ENCODE measurements at regions of chr17 and their contacts with region 1.

Region 1: DNA sequence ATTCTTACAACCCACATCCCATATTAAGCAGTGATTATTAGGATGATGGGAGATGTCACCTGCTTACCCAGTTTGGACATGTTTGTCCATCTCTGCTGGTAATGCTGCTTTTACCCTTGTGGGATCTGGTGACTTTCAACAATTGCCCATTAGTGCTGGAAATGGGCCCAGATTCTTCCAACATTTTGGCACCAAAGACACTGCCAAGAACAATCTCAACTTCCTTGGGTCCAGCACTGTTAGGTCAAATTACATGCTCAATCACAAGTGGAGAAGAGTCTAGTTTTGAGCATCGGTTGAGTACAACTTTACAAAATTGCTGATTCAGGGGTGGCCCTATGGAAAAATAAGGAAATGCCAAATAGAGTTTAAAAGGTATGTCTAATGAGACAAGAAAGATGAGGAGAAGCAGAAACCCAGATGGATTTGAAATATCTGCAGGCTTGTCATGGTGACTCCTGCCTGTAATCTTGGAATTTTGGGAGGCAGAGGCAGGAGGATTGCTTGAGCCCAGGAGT is 13.0 kb upstream of the ZFP3 start:
- DNase-seq: no peak
- ATAC-seq: no peak
- H3K4me3 ChIP-seq: no peak overlapping the region
- H3K4me3 Mint-ChIP-seq: no peak overlapping the region
- H3K27ac ChIP-seq: no peak overlapping the region
- H3K27ac Mint-ChIP-seq: no peak overlapping the region
- H3K4me1 ChIP-seq: peaks cover 4% of the 10 kb centered on the region
- H3K4me1 Mint-ChIP-seq: peaks cover 5% of the 10 kb centered on the region
- H3K27me3 ChIP-seq: no peaks in the 10 kb centered on the region
- H3K27me3 Mint-ChIP-seq: no peaks in the 10 kb centered on the region
- CTCF ChIP-seq: no peak

Region 2: DNA sequence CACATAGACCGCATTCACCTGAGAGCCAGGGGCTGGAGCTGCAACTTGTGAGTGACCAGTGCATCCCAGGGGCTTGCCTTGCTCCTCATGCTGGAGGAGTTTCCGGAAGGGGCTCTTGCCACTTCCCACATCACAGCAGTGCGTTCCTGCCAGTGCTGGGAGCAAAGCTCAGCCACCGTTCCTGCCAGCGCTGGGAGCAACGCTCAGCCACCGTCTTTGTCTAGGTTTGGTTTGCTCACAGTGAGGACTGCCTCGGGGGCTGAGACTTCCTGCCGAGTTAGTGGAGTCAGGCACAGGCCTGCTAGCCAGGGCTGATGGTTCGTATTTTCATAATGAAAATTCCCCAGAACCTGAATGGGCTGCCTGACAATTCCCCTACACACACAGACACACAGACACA is 157.0 kb before region 1 on chr17:
- CTCF ChIA-PET with region 1: interaction called, 8 read pairs
- POLR2A ChIA-PET with region 1: no interaction called
- intact Hi-C with region 1: loop called (anchors 1 kb)
- DNase-seq: peak in 1 of 9 experiments; percentile 29
- ATAC-seq: no peak
- H3K4me3 ChIP-seq: no peak overlapping the region
- H3K4me3 Mint-ChIP-seq: no peak overlapping the region
- H3K27ac ChIP-seq: no peak overlapping the region
- H3K27ac Mint-ChIP-seq: no peak overlapping the region
- H3K4me1 ChIP-seq: peaks cover 22% of the 10 kb centered on the region
- H3K4me1 Mint-ChIP-seq: peaks cover 7% of the 10 kb centered on the region
- H3K27me3 ChIP-seq: no peaks in the 10 kb centered on the region
- H3K27me3 Mint-ChIP-seq: no peaks in the 10 kb centered on the region
- CTCF ChIP-seq: no peak

Region 3: GRCh38 chr17:4980644-4981216 is 84.6 kb before region 1 on chr17:
- CTCF ChIA-PET with region 1: interaction called, 63 read pairs
- POLR2A ChIA-PET with region 1: no interaction called
- intact Hi-C with region 1: loop called in 1 of 2 experiments (anchors 1 kb)
- DNase-seq: peak in 4 of 9 experiments; percentile 50 to 80 (median 67)
- ATAC-seq: peak; percentile 98
- H3K4me3 ChIP-seq: no peak overlapping the region
- H3K4me3 Mint-ChIP-seq: peak overlapping the region; percentile 23
- H3K27ac ChIP-seq: no peak overlapping the region
- H3K27ac Mint-ChIP-seq: no peak overlapping the region
- H3K4me1 ChIP-seq: peaks cover 9% of the 10 kb centered on the region
- H3K4me1 Mint-ChIP-seq: peaks cover 19% of the 10 kb centered on the region
- H3K27me3 ChIP-seq: no peaks in the 10 kb centered on the region
- H3K27me3 Mint-ChIP-seq: no peaks in the 10 kb centered on the region
- CTCF ChIP-seq: peak; percentile 87

Region 4: DNA sequence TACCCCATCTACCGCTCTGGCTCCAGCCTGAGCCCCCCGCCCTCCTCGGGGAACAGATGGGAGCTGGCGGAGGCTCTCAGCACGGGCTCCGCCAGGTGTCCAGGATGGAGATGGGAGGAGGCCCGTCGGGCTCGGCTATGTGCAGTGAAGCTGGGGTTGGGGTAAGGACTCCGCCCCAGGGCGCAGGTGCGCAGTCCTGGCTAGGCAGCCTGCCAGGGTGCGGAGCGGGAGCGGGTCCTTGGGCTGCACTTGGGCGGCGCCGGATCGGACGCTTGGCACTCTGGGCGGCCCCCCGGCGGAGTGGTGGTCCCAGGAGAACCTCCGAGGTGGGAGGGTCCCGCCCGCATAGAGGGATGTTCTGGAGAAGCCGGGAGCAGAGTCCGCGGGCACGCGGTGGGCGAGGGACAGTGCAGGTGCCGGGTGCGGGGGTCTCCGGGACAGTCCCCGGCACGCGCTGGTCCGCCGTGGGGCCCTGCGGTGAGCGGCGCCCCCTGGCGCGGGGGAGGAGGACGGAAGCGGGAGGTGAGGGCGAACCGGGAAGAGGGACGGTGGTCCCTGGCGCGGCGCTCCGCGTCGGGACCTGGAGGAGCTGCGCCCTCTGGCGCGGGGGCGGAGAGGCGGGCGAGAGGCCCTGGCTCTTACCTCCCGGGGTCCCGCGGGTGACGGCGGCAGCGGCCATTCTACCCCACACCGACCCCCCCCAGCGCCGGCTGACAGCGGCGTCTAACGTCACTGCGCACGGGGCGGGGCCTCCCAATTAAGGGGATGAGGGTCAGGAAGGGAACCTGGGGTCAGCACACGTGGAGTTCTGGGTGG is 78.1 kb before region 1 on chr17 and contains the start of gene CAMTA2:
- CTCF ChIA-PET with region 1: interaction called, 16 read pairs
- POLR2A ChIA-PET with region 1: no interaction called
- intact Hi-C with region 1: no loop called
- DNase-seq: peak; percentile 69 to 92 (median 91)
- ATAC-seq: peak; percentile 91
- H3K4me3 ChIP-seq: peak within 1 kb of the TSS; percentile 98 to 100
- H3K4me3 Mint-ChIP-seq: peak within 1 kb of the TSS; percentile 91
- H3K27ac ChIP-seq: peak within 1 kb of the TSS; percentile 80 to 98
- H3K27ac Mint-ChIP-seq: peak within 1 kb of the TSS; percentile 95
- H3K4me1 ChIP-seq: peaks cover 27% of the 10 kb centered on the region
- H3K4me1 Mint-ChIP-seq: peaks cover 38% of the 10 kb centered on the region
- H3K27me3 ChIP-seq: no peaks in the 10 kb centered on the region
- H3K27me3 Mint-ChIP-seq: no peaks in the 10 kb centered on the region
- CTCF ChIP-seq: peak; percentile 76
- total RNA-seq, gene CAMTA2: 40.1 to 42.3 TPM

Region 5: GRCh38 chr17:5019475-5019956 is 45.8 kb before region 1 on chr17:
- CTCF ChIA-PET with region 1: interaction called, 13 read pairs
- POLR2A ChIA-PET with region 1: no interaction called
- intact Hi-C with region 1: loop called in 1 of 2 experiments (anchors 10 kb)
- DNase-seq: peak in 8 of 9 experiments; percentile 32 to 68 (median 52)
- ATAC-seq: peak; percentile 95
- H3K4me3 ChIP-seq: no peak overlapping the region
- H3K4me3 Mint-ChIP-seq: no peak overlapping the region
- H3K27ac ChIP-seq: no peak overlapping the region
- H3K27ac Mint-ChIP-seq: peak overlapping the region; percentile 75
- H3K4me1 ChIP-seq: no peaks in the 10 kb centered on the region
- H3K4me1 Mint-ChIP-seq: peaks cover 7% of the 10 kb centered on the region
- H3K27me3 ChIP-seq: no peaks in the 10 kb centered on the region
- H3K27me3 Mint-ChIP-seq: no peaks in the 10 kb centered on the region
- CTCF ChIP-seq: no peak

Region 6: DNA sequence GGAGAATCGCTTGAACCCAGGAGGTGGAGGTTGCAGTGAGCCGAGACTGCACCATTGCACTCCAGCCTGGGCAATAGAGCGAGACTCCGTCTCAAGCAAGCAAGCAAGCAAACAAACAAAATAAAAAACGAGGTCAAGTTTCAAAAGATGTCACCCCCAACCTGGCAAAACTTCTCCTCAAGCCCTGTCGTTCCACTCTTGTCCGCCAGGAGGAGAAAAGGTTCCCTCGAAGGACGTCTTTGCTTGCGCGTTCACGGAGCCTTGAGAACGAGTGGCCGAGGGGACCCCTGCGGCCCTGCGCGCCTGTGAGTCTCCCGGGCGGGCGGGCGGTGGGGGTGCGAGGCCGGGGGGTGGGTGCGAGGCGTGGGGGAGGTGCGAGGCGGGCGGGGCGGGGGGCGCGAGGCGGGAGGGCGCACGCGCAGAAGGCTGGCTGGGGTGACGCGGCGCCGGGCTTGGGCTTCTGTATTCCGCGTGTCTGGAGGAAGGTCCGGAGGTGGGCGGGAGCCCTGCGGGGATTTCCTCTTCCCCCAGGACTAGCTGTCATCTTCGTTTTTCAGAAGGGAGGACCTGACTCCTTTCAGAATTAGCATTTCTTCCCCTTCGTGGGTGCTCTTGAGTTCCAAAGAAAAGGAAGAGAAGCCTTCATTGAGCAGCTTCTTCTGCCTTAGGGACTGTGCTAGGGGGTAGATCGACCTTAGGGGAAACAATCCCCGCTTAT is 33.8 kb before region 1 on chr17:
- CTCF ChIA-PET with region 1: interaction called, 135 read pairs
- POLR2A ChIA-PET with region 1: interaction called, 5 read pairs
- intact Hi-C with region 1: loop called (anchors 1 kb)
- DNase-seq: peak; percentile 71 to 91 (median 85)
- ATAC-seq: peak; percentile 87
- H3K4me3 ChIP-seq: peak overlapping the region; percentile 30 to 55
- H3K4me3 Mint-ChIP-seq: peak overlapping the region; percentile 83
- H3K27ac ChIP-seq: peak overlapping the region; percentile 26 to 67
- H3K27ac Mint-ChIP-seq: peak overlapping the region; percentile 84
- H3K4me1 ChIP-seq: peaks cover 13% of the 10 kb centered on the region
- H3K4me1 Mint-ChIP-seq: peaks cover 14% of the 10 kb centered on the region
- H3K27me3 ChIP-seq: no peaks in the 10 kb centered on the region
- H3K27me3 Mint-ChIP-seq: peaks cover 2% of the 10 kb centered on the region
- CTCF ChIP-seq: peak; percentile 71

Region 7: DNA sequence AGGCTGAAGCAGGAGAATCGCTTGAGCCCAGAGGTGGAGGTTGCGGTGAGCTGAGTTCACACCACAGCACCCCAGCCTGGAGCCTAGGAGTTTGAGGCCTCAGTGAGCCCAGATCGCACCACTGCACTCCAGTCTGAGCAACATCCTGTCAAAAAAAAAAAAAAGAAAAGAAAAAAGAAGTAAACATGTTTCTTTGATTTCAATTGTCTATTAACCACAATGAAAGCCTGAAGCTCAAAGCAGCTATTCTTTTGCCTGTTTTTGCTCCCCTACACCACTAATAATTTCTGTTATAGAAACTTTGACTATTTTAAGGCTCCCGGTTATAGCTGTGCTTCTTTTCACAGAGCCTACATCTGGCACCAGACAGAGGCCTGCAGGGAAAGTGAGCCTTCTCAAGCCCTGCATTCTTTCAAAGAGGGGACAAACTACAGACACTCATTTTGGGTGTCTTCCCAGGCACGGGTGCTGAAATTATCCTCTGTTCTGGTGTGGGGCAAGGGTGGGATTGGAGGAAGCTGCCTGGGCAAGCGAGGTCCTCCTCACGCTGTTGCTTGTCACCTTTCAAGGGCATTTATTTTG is 15.9 kb before region 1 on chr17:
- CTCF ChIA-PET with region 1: interaction called, 46 read pairs
- POLR2A ChIA-PET with region 1: interaction called, 7 read pairs
- intact Hi-C with region 1: loop called in 1 of 2 experiments (anchors 1 kb)
- DNase-seq: peak; percentile 42 to 93 (median 71)
- ATAC-seq: peak; percentile 97
- H3K4me3 ChIP-seq: no peak overlapping the region
- H3K4me3 Mint-ChIP-seq: peak overlapping the region; percentile 49
- H3K27ac ChIP-seq: peak overlapping the region; percentile 8 to 64
- H3K27ac Mint-ChIP-seq: peak overlapping the region; percentile 95
- H3K4me1 ChIP-seq: peaks cover 24% of the 10 kb centered on the region
- H3K4me1 Mint-ChIP-seq: peaks cover 47% of the 10 kb centered on the region
- H3K27me3 ChIP-seq: no peaks in the 10 kb centered on the region
- H3K27me3 Mint-ChIP-seq: no peaks in the 10 kb centered on the region
- CTCF ChIP-seq: no peak

Region 8: GRCh38 chr17:5164436-5164835 is 99.2 kb after region 1 on chr17:
- CTCF ChIA-PET with region 1: no interaction called
- POLR2A ChIA-PET with region 1: no interaction called
- intact Hi-C with region 1: no loop called
- DNase-seq: no peak
- ATAC-seq: no peak
- H3K4me3 ChIP-seq: no peak overlapping the region
- H3K4me3 Mint-ChIP-seq: no peak overlapping the region
- H3K27ac ChIP-seq: no peak overlapping the region
- H3K27ac Mint-ChIP-seq: no peak overlapping the region
- H3K4me1 ChIP-seq: no peaks in the 10 kb centered on the region
- H3K4me1 Mint-ChIP-seq: no peaks in the 10 kb centered on the region
- H3K27me3 ChIP-seq: no peaks in the 10 kb centered on the region
- H3K27me3 Mint-ChIP-seq: peaks cover 9% of the 10 kb centered on the region
- CTCF ChIP-seq: no peak

Measured in CD8-positive, alpha-beta T cell (primary cell).